ENCODE measurements at regions of chr6 and their contacts with region 1.

Region 1: DNA sequence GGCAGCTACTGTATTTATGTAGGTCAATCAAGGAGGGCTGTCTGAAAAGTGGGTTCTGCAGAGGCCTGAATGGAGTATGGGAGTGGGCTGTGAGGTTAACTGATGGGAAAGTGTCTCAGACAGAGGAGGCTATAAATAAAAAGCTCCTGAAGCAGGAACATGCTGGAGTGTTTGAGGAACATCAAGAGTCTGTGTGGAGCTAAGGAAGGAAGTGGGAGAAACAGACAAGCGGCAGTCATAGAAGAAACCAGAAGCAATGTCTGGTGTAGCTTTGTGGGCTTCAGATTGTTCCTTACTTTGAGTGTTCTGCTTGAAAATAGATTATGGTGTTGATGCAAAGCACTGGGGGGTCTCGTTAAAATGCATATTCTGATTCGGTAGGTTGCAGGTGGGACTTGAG is 101.5 kb upstream of the OGFRL1 start:
- DNase-seq: no peak
- H3K4me3 ChIP-seq: no peak overlapping the region
- CTCF ChIP-seq: no peak
- POLR2A ChIP-seq: no peak

Region 2: GRCh38 chr6:71342772-71343171 is 155.6 kb after region 1 on chr6:
- intact Hi-C with region 1: loop called (anchors 5 kb)
- DNase-seq: no peak
- H3K4me3 ChIP-seq: no peak overlapping the region
- CTCF ChIP-seq: no peak
- POLR2A ChIP-seq: no peak

Measured in lower leg skin (tissue), 4 donors.